ENCODE measurements at regions of chrX and their contacts with region 1.

Region 1: DNA sequence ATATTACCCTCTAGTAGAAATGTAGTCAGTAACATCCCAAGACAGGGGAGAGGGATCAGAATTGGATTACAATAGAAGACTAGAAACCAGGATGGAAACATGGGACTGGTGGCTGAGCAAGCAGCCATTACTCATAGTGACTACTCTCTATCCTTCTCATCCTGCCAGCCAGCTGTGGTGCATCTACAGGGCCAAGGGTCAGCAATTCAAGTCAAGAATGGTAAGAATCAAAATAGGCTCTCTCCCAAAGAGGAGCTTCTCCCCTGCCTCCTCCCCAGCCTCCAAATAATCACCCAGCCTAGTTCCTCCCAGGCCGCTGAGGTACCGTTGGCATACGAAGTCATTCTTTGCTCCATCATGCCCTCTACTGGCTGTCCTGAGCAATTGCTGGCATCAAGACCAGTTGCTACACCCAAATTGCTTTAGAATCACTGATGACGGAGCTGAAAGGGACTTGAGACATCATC is 19.4 kb downstream of the AWAT2 start:
- H3K4me3 ChIP-seq: no peak overlapping the region
- H3K27ac ChIP-seq: no peak overlapping the region
- H3K4me1 ChIP-seq: no peaks in the 10 kb centered on the region
- CTCF ChIP-seq: peak; percentile 76; the same call in 1 of the 2 replicates

Region 2: GRCh38 chrX:69493193-69493592 is 537.1 kb before region 1 on chrX:
- CTCF ChIA-PET with region 1: interaction called, 25 read pairs
- POLR2A ChIA-PET with region 1: no interaction called
- H3K4me3 ChIP-seq: no peak overlapping the region
- H3K27ac ChIP-seq: no peak overlapping the region
- H3K4me1 ChIP-seq: no peaks in the 10 kb centered on the region
- CTCF ChIP-seq: peak; percentile 49

Region 3: DNA sequence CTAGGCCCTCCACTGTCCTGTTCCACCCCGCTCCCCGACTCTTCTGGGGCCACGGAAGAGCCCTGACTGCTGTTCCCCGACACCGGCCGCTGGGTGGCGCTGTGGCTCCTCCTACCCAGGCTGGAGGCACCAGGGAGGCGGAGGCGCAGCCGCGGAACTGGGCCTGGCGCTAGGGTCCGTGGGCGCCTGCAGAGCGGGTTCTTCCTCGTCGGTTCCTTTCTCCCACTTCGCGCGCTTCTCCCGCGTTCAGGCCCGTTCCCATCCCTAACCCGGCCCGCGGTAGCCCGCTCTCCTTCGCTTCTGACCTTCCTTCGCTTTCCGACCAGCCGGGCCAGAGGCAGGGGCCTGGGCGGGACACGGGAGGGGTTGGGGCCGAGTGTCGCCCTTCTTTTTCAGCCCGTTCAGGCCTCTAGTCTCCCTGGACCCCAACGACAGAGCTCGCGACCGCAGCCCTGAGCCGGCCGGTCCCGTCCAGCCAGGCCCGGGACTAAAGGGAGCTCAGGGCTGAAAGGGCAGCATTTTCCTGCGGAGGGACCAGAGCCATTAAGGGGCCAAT is 491.9 kb before region 1 on chrX:
- CTCF ChIA-PET with region 1: interaction called, 56 read pairs
- POLR2A ChIA-PET with region 1: no interaction called
- H3K4me3 ChIP-seq: peak overlapping the region; percentile 15
- H3K27ac ChIP-seq: 0 out of 2 replicates have a peak overlapping the region, but pooled peaks have one; percentile 39
- H3K4me1 ChIP-seq: no peaks in the 10 kb centered on the region; the same call in 1 of the 2 replicates
- CTCF ChIP-seq: peak; percentile 94

Region 4: DNA sequence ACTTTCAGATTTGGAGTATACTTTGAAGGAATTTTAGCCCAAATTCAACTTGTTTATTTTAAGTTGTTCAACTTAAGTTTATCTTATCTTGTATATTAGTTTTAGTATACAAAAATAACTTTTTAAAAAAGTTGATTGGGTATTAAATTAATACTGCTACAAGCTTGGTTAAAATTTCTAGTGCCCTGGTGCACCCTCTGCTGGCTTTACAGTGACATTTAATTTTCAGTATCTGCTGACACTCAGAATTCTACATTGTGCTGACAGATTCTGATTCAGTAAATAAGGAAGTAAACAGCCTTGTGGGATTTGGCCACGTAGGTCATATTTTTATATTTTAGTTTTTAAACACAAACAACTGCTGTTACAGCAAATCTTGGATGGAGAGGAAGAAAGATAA is 411.5 kb before region 1 on chrX:
- CTCF ChIA-PET with region 1: interaction called, 18 read pairs
- POLR2A ChIA-PET with region 1: no interaction called
- H3K4me3 ChIP-seq: no peak overlapping the region
- H3K27ac ChIP-seq: no peak overlapping the region
- H3K4me1 ChIP-seq: peaks cover 3% of the 10 kb centered on the region; the same call in 1 of the 2 replicates
- CTCF ChIP-seq: peak; percentile 13; the same call in 1 of the 2 replicates

Region 5: GRCh38 chrX:70013466-70014381 is 16.6 kb before region 1 on chrX:
- CTCF ChIA-PET with region 1: interaction called, 46 read pairs
- POLR2A ChIA-PET with region 1: interaction called, 6 read pairs
- H3K4me3 ChIP-seq: no peak overlapping the region
- H3K27ac ChIP-seq: no peak overlapping the region
- H3K4me1 ChIP-seq: no peaks in the 10 kb centered on the region
- CTCF ChIP-seq: no peak

Region 6: GRCh38 chrX:70042399-70043371 is 12.4 kb after region 1 on chrX:
- CTCF ChIA-PET with region 1: interaction called, 48 read pairs
- POLR2A ChIA-PET with region 1: no interaction called
- H3K4me3 ChIP-seq: no peak overlapping the region
- H3K27ac ChIP-seq: no peak overlapping the region
- H3K4me1 ChIP-seq: no peaks in the 10 kb centered on the region
- CTCF ChIP-seq: no peak

Region 7: DNA sequence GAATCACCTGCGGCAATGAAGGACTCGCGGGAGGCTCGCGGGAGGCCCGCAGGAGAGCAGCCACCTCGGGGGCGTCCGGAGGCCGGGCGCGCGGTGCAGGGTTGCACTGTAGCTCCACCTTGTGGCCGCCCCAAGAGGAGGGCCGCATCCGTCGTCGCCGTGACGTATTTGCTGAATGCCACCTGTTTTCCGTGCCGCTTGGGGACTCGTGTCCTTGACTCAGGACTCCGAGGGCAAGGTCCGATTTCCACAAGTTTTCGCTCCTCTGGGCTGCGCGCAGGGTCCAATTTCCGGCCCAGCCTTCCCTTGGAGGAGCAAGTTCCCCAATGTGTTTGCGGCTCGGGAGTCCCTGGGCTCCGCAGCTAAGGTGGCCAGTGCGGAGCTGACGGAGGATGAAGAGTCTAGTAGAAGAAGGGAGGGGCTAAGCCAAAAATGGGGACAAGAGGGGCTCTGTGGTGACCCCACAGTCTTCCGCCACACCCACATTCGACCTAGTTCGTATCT is 403.6 kb after region 1 on chrX:
- CTCF ChIA-PET with region 1: no interaction called
- POLR2A ChIA-PET with region 1: no interaction called
- H3K4me3 ChIP-seq: peak overlapping the region; percentile 48
- H3K27ac ChIP-seq: peak overlapping the region; percentile 25; the same call in 1 of the 2 replicates
- H3K4me1 ChIP-seq: peaks cover 2% of the 10 kb centered on the region; the same call in 1 of the 2 replicates
- CTCF ChIP-seq: peak; percentile 92

Region 8: GRCh38 chrX:70755850-70756249 is 725.5 kb after region 1 on chrX:
- CTCF ChIA-PET with region 1: no interaction called
- POLR2A ChIA-PET with region 1: no interaction called
- H3K4me3 ChIP-seq: no peak overlapping the region
- H3K27ac ChIP-seq: no peak overlapping the region
- H3K4me1 ChIP-seq: no peaks in the 10 kb centered on the region
- CTCF ChIP-seq: no peak

Measured in HEK293 (cell line).